Activated CD4-positive, alpha-beta memory T cell treated with anti-CD3 and anti-CD28 coated beads for 36 hours (primary cell): ENCODE measurements at regions of chr17 and their contacts with region 1.

Region 1: DNA sequence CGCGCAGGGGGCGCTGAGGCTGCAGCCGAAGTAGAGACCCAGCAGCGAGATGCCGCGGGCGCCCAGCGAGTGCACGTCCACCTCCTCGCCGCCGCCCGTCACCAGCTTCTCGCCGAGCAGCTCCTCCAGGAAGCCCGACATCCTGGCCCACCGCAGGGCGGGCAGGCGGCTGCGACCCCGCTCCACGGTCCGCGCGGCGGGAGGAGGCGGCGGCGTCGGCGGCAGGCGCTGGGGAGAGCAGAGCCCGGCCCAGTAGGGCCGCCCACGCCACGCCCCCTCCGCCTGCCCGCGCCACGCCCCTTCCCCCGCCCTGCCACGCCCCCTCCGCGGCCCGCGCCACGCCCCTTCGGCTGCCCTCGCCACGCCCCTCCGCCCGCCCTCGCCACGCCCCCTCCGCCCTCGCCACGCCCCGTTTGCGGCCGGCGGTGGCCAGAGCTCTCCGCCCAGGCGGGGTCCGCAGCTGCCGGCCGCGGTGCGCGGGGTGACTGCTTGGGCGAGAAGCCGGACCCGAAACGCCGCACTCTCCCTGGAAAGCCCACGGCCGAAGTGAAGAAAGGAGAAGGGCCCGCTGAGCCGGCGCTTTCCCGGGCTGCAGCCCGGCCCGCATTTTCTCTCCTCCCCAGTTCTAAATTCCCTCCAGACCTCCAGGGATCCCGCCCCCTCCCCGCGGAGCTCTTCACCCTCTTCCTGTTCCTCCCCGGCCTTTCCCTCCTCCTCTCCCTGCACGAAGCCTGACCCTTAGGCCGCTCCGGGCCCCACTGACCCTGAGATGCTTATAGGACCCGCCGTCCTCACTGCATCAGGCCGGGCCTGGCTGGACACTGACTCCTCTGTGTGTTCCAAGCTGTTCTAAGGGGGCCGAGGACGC is at the start of gene NXN:
- DNase-seq: peak; percentile 90
- H3K4me3 Mint-ChIP-seq: peak within 1 kb of the TSS; percentile 63
- H3K27ac Mint-ChIP-seq: no peak within 1 kb of the TSS
- H3K4me1 Mint-ChIP-seq: peaks cover 11% of the 10 kb centered on the region
- H3K27me3 Mint-ChIP-seq: peaks cover 26% of the 10 kb centered on the region
- total RNA-seq, gene NXN: 0.31 to 0.33 TPM

Region 2: GRCh38 chr17:794876-795275 is 184.9 kb before region 1 on chr17:
- CTCF ChIA-PET with region 1: interaction called, 52 read pairs
- POLR2A ChIA-PET with region 1: no interaction called
- intact Hi-C with region 1: no loop called
- DNase-seq: peak; percentile 61
- H3K4me3 Mint-ChIP-seq: no peak overlapping the region
- H3K27ac Mint-ChIP-seq: no peak overlapping the region
- H3K4me1 Mint-ChIP-seq: peaks cover 2% of the 10 kb centered on the region
- H3K27me3 Mint-ChIP-seq: no peaks in the 10 kb centered on the region

Region 3: GRCh38 chr17:879549-880442 is 100.0 kb before region 1 on chr17:
- CTCF ChIA-PET with region 1: interaction called, 31 read pairs
- POLR2A ChIA-PET with region 1: no interaction called
- intact Hi-C with region 1: loop called (anchors 1 kb)
- DNase-seq: peak; percentile 81
- H3K4me3 Mint-ChIP-seq: no peak overlapping the region
- H3K27ac Mint-ChIP-seq: no peak overlapping the region
- H3K4me1 Mint-ChIP-seq: peaks cover 10% of the 10 kb centered on the region
- H3K27me3 Mint-ChIP-seq: peaks cover 29% of the 10 kb centered on the region